ENCODE measurements at regions of chr9 and their contacts with region 1.

Region 1: DNA sequence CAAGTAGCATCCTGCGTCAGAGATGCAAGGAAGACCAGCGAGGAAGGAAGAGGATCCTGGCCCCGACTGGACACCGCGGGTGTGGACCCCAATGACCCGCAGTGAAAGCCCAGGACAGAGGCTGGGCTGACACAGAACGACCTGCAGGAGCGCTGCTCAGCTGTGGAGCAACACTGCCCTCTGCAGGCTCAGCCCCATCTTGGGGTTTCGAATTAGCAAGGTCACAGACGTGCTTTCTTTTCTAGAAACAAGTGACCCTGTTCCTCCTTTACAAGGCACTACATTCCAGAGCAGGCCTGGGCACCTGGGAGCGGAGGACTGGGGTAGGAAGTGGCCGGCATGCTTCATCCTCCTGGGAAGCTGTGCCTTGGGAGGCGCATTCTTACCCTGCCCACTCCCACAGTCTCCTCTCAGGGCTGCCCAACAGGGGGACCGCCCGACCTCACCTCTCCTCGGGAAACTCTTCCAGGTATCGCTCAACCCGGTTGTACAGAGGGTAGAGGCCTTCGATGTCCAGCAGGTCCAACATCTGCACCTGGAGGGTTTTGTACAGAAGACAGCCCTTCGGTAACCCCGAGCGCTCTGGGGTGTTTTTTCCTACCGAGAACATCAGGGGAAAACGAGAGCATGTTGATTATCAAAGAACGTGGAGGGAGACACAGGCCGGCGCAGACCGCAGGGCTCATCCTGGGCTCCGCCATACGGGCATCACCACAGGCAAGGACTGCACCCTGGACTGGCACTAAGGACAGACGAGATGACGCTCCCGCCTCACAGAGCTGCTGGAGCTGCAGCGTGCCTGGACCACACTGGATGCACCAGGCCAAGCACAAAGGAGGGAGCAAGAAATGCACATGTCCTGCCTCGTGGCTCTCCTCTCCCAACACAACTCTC is 35.0 kb downstream of the IPPK start:
- DNase-seq: peak; percentile 70
- ATAC-seq: peak; percentile 99
- H3K4me3 ChIP-seq: no peak overlapping the region
- H3K27ac ChIP-seq: no peak overlapping the region
- H3K4me1 ChIP-seq: no peaks in the 10 kb centered on the region
- H3K27me3 ChIP-seq: no peaks in the 10 kb centered on the region
- CTCF ChIP-seq: peak; percentile 99
- POLR2A ChIP-seq: peak; percentile 50; the same call in 1 of the 2 replicates
- RAD21 ChIP-seq: peak; percentile 98

Region 2: DNA sequence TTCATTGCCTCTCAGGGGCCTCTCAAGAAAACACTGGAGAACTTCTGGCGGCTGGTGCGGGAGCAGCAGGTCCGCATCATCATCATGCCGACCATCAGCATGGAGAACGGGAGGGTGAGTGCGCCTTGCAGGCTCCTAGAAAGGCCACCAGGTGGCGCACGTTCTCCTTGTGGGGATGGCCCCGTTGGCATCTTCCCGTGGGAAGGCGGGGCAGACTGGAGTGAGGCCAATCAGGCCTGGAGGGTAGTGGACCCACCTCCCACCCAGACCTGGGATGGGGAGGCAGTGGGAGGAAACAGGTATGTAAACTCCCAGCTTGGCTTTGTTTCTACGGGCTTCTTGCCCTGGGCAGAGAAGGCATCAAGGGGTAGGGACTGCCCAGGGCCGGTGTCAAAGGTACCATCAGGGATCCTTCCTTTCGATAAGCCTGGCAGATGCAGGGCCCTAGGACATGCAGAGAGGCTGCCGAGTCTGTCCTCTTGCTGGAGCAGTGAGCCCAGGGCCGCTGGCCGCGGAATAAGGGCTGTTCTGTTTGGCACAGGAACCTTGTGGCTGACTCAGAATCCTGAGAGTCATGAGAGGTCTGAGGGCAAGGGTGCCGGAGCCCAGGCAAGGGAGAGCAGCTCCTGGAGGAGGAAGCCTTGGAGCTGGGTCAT is 500.9 kb before region 1 on chr9:
- CTCF ChIA-PET with region 1: no interaction called
- POLR2A ChIA-PET with region 1: no interaction called
- dilution Hi-C with region 1: no loop called
- in situ Hi-C with region 1: loop called (anchors 10 kb)
- intact Hi-C with region 1: loop called (anchors 1 kb)
- DNase-seq: peak; percentile 77
- ATAC-seq: peak; percentile 80
- H3K4me3 ChIP-seq: no peak overlapping the region
- H3K27ac ChIP-seq: peak overlapping the region; percentile 28
- H3K4me1 ChIP-seq: peaks cover 15% of the 10 kb centered on the region
- H3K27me3 ChIP-seq: no peaks in the 10 kb centered on the region
- CTCF ChIP-seq: peak; percentile 93
- POLR2A ChIP-seq: no peak
- RAD21 ChIP-seq: peak; percentile 85

Region 3: GRCh38 chr9:92325269-92325990 is 309.5 kb before region 1 on chr9 and contains the starts of genes CENPP and NOL8:
- CTCF ChIA-PET with region 1: interaction called, 10 read pairs
- POLR2A ChIA-PET with region 1: no interaction called
- dilution Hi-C with region 1: no loop called
- in situ Hi-C with region 1: loop called (anchors 5 kb)
- intact Hi-C with region 1: loop called (anchors 1 kb)
- DNase-seq: peak; percentile 86
- ATAC-seq: peak; percentile 95
- H3K4me3 ChIP-seq: peak within 1 kb of the TSS; percentile 64
- H3K27ac ChIP-seq: peak within 1 kb of the TSS; percentile 96
- H3K4me1 ChIP-seq: no peaks in the 10 kb centered on the region
- H3K27me3 ChIP-seq: no peaks in the 10 kb centered on the region
- CTCF ChIP-seq: no peak
- POLR2A ChIP-seq: peak; percentile 75; the same call in 1 of the 2 replicates
- RAD21 ChIP-seq: peak; percentile 9; the same call in 1 of the 2 replicates
- total RNA-seq, gene CENPP: 1.4 and 3.6 TPM in 2 replicates
- total RNA-seq, gene NOL8: 18.3 and 23.6 TPM in 2 replicates

Region 4: GRCh38 chr9:92342825-92343488 is 292.0 kb before region 1 on chr9:
- CTCF ChIA-PET with region 1: no interaction called
- POLR2A ChIA-PET with region 1: no interaction called
- dilution Hi-C with region 1: no loop called
- in situ Hi-C with region 1: no loop called
- intact Hi-C with region 1: loop called (anchors 1 kb)
- DNase-seq: peak; percentile 9
- ATAC-seq: peak; percentile 48; the same call in 1 of the 2 replicates
- H3K4me3 ChIP-seq: no peak overlapping the region
- H3K27ac ChIP-seq: no peak overlapping the region
- H3K4me1 ChIP-seq: peaks cover 2% of the 10 kb centered on the region; the same call in 1 of the 2 replicates
- H3K27me3 ChIP-seq: no peaks in the 10 kb centered on the region
- CTCF ChIP-seq: peak; percentile 38
- POLR2A ChIP-seq: no peak
- RAD21 ChIP-seq: peak; percentile 30

Region 5: GRCh38 chr9:92706216-92706940 is 71.4 kb after region 1 on chr9:
- CTCF ChIA-PET with region 1: no interaction called
- POLR2A ChIA-PET with region 1: no interaction called
- dilution Hi-C with region 1: no loop called
- in situ Hi-C with region 1: no loop called
- intact Hi-C with region 1: no loop called
- DNase-seq: no peak
- ATAC-seq: no peak; the same call in 1 of the 2 replicates
- H3K4me3 ChIP-seq: no peak overlapping the region
- H3K27ac ChIP-seq: no peak overlapping the region
- H3K4me1 ChIP-seq: no peaks in the 10 kb centered on the region
- H3K27me3 ChIP-seq: no peaks in the 10 kb centered on the region
- CTCF ChIP-seq: 0 out of 2 replicates have a peak, but pooled peaks have one; percentile 21
- POLR2A ChIP-seq: no peak
- RAD21 ChIP-seq: no peak; the same call in 1 of the 2 replicates

Region 6: DNA sequence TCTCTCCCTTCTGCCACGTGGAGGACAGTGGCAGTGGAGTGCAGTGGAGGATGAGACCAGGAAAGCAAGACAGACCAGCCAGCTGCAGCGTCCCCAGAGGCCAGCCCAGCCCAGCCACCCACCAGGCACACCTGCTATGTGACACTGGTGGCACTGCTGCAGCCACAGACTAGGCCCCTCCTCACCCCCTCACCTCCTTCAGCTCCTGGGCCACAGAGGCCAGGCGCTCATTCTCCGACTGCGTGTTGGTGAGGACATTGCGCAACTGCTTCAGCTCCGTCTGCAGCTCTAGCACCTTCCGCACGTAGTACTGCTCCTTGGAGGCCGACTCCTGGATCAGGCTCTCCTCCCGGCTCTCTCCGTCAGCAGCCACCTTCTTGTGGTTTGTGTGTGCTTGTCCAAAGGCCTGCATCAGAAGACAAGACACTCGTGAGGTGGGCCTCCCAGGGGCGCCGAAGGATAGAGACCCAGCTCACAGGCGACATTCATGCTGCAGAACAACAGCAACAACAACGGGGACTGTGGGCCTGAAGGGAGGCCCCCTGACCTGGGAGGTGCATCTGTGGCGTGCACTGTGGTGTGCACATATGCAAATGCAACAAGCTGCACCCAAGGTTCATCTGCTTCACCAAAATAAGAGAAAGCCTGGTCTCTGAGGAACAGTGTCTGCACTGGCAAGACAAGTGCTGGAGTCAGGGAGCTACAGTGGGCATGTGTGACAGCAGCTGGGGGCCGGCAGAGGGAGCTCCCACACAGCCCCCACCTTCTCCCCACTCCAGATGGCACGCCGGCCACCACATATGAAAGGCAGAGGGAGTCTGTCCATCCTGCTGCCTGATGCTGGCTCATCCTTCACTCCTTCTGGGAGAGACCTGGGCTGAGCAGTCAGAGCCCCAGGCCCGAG is 94.1 kb after region 1 on chr9:
- CTCF ChIA-PET with region 1: no interaction called
- POLR2A ChIA-PET with region 1: no interaction called
- dilution Hi-C with region 1: no loop called
- in situ Hi-C with region 1: no loop called
- intact Hi-C with region 1: no loop called
- DNase-seq: peak; percentile 20
- ATAC-seq: peak; percentile 79
- H3K4me3 ChIP-seq: no peak overlapping the region
- H3K27ac ChIP-seq: no peak overlapping the region
- H3K4me1 ChIP-seq: peaks cover 3% of the 10 kb centered on the region
- H3K27me3 ChIP-seq: no peaks in the 10 kb centered on the region
- CTCF ChIP-seq: peak; percentile 54
- POLR2A ChIP-seq: no peak
- RAD21 ChIP-seq: peak; percentile 67

Measured in IMR-90 (cell line).